ENCODE measurements at regions of chr4 and their contacts with region 1.

Region 1: GRCh38 chr4:7947927-7948326 is 8.3 kb upstream of the AFAP1 start:
- DNase-seq: peak; percentile 56
- H3K4me3 Mint-ChIP-seq: no peak overlapping the region
- H3K27ac Mint-ChIP-seq: no peak overlapping the region
- H3K4me1 Mint-ChIP-seq: peaks cover 15% of the 10 kb centered on the region
- H3K27me3 Mint-ChIP-seq: no peaks in the 10 kb centered on the region

Region 2: GRCh38 chr4:7904952-7905915 is 42.7 kb before region 1 on chr4:
- CTCF ChIA-PET with region 1: no interaction called
- intact Hi-C with region 1: no loop called
- DNase-seq: no peak
- H3K4me3 Mint-ChIP-seq: no peak overlapping the region
- H3K27ac Mint-ChIP-seq: no peak overlapping the region
- H3K4me1 Mint-ChIP-seq: peaks cover 48% of the 10 kb centered on the region
- H3K27me3 Mint-ChIP-seq: no peaks in the 10 kb centered on the region

Region 3: GRCh38 chr4:7960790-7961655 is 13.1 kb after region 1 on chr4:
- CTCF ChIA-PET with region 1: interaction called, 3 read pairs
- intact Hi-C with region 1: loop called (anchors 1 kb)
- DNase-seq: peak; percentile 87
- H3K4me3 Mint-ChIP-seq: peak overlapping the region; percentile 2
- H3K27ac Mint-ChIP-seq: peak overlapping the region; percentile 68
- H3K4me1 Mint-ChIP-seq: peaks cover 48% of the 10 kb centered on the region
- H3K27me3 Mint-ChIP-seq: no peaks in the 10 kb centered on the region